CD14-positive monocyte (primary cell): ENCODE measurements at regions of chr1 and their contacts with region 1.

Region 1: GRCh38 chr1:221741711-221742554 is at the start of gene DUSP10:
- DNase-seq: peak; percentile 99
- H3K4me3 ChIP-seq: peak within 1 kb of the TSS; percentile 94 to 99 (median 95)
- H3K4me3 Mint-ChIP-seq: peak within 1 kb of the TSS in 1 of 2 donors; percentile 86
- H3K27ac ChIP-seq: peak within 1 kb of the TSS; percentile 97 to 98
- H3K27ac Mint-ChIP-seq: no peak within 1 kb of the TSS
- H3K4me1 ChIP-seq: peaks cover 35 to 46% of the 10 kb centered on the region in 2 donors
- H3K4me1 Mint-ChIP-seq: peaks cover 10% of the 10 kb centered on the region
- H3K27me3 ChIP-seq: no peaks in the 10 kb centered on the region
- H3K27me3 Mint-ChIP-seq: no peaks in the 10 kb centered on the region
- CTCF ChIP-seq: no peak
- polyA plus RNA-seq, gene DUSP10: 10.4 to 41.1 (median 12.7) TPM

Region 2: DNA sequence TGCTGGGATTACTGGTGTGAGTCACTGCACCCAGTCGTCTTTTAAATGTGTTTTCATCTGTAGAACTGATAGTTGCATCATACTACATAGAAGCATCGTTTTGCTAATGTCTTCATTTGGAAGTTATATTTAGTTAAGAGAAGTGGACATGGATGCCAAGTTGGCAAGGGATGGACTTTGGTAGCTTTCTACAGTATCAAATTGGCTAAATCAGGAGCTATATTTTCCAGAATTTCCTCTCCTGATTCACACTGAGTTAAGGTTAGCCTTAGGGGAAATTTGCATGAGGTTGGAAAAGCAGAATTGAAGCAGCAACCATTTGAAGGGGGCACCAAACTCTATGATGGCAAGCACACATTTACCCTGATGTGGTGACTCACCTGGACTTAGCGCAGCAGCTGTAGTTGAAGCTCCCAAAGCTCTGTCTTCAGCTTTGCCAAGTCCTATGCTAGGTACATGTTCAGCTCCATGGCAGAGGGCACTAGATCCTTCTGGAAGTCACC is 44.0 kb before region 1 on chr1:
- intact Hi-C with region 1: loop called (anchors 5 kb)
- DNase-seq: peak; percentile 50 to 66 (median 57)
- H3K4me3 ChIP-seq: peak overlapping the region in 1 of 3 experiments; percentile 10
- H3K4me3 Mint-ChIP-seq: no peak overlapping the region
- H3K27ac ChIP-seq: peak overlapping the region; percentile 7 to 74
- H3K27ac Mint-ChIP-seq: peak overlapping the region; percentile 73 to 94 (median 90)
- H3K4me1 ChIP-seq: peaks cover 63 to 67% of the 10 kb centered on the region in 2 donors
- H3K4me1 Mint-ChIP-seq: peaks cover 50% of the 10 kb centered on the region
- H3K27me3 ChIP-seq: no peaks in the 10 kb centered on the region
- H3K27me3 Mint-ChIP-seq: no peaks in the 10 kb centered on the region
- CTCF ChIP-seq: no peak

Region 3: DNA sequence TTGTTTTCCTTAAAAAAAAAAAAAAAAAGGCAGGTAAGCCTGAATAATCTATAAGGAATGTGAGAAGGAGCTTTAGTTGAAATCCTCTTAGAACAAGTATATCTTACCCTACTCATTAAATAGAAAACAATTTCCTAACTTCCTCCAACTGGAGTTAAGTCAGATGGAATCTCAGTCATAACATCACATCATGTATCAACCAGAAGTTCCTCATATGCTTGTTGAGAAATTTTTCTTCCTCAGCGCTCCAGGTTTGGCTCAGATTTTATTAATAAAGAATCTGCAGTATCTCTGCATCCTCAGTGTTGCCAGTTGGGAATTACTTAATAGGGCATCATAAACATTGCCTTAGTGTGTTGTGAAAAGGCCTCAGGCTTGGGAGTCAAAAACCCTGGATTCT is 37.6 kb before region 1 on chr1:
- intact Hi-C with region 1: loop called (anchors 5 kb)
- DNase-seq: peak; percentile 60 to 85 (median 84)
- H3K4me3 ChIP-seq: peak overlapping the region in 1 of 3 experiments; percentile 27
- H3K4me3 Mint-ChIP-seq: peak overlapping the region in 1 of 2 donors; percentile 39
- H3K27ac ChIP-seq: peak overlapping the region; percentile 73 to 89
- H3K27ac Mint-ChIP-seq: peak overlapping the region; percentile 87 to 96 (median 94)
- H3K4me1 ChIP-seq: peaks cover 94 to 99% of the 10 kb centered on the region in 2 donors
- H3K4me1 Mint-ChIP-seq: peaks cover 79% of the 10 kb centered on the region
- H3K27me3 ChIP-seq: no peaks in the 10 kb centered on the region
- H3K27me3 Mint-ChIP-seq: peaks cover 0 to 3% (median 0%) of the 10 kb centered on the region in 3 donors
- CTCF ChIP-seq: no peak

Region 4: GRCh38 chr1:221829327-221830015 is 87.5 kb after region 1 on chr1:
- intact Hi-C with region 1: no loop called
- DNase-seq: no peak
- H3K4me3 ChIP-seq: no peak overlapping the region
- H3K4me3 Mint-ChIP-seq: peak overlapping the region in 1 of 2 donors; percentile 9
- H3K27ac ChIP-seq: no peak overlapping the region
- H3K27ac Mint-ChIP-seq: peak overlapping the region in 1 of 7 donors; percentile 23
- H3K4me1 ChIP-seq: peaks cover 7% of the 10 kb centered on the region in 2 donors
- H3K4me1 Mint-ChIP-seq: peaks cover 27% of the 10 kb centered on the region
- H3K27me3 ChIP-seq: no peaks in the 10 kb centered on the region
- H3K27me3 Mint-ChIP-seq: peaks cover 0 to 6% (median 1%) of the 10 kb centered on the region in 3 donors
- CTCF ChIP-seq: no peak